Stomach (tissue), 19 donors: ENCODE measurements at regions of chr16 and their contacts with region 1.

Region 1: GRCh38 chr16:11977376-11978041 is 975 bp downstream of the SNX29 start:
- DNase-seq: peak in 1 of 2 donors; percentile 17
- H3K4me3 ChIP-seq: peak overlapping the region; percentile 85 to 96 (median 90)
- H3K27ac ChIP-seq: peak overlapping the region in 4 of 5 donors; percentile 80 to 91 (median 87)
- H3K4me1 ChIP-seq: peaks cover 6 to 26% (median 23%) of the 10 kb centered on the region in 4 donors
- H3K27me3 ChIP-seq: no peaks in the 10 kb centered on the region
- CTCF ChIP-seq: no peak
- EP300 ChIP-seq: no peak
- POLR2A ChIP-seq: no peak

Region 2: GRCh38 chr16:12067714-12068401 is 90.3 kb after region 1 on chr16:
- intact Hi-C with region 1: loop called (anchors 10 kb)
- DNase-seq: peak; percentile 72 to 91
- H3K4me3 ChIP-seq: no peak overlapping the region
- H3K27ac ChIP-seq: no peak overlapping the region
- H3K4me1 ChIP-seq: peaks cover 0 to 10% (median 4%) of the 10 kb centered on the region in 4 donors
- H3K27me3 ChIP-seq: no peaks in the 10 kb centered on the region
- CTCF ChIP-seq: peak in 5 of 7 experiments; percentile 92 to 98 (median 95)
- EP300 ChIP-seq: no peak
- POLR2A ChIP-seq: no peak